GM12878 (cell line): ENCODE measurements at regions of chr9 and their contacts with region 1.

Region 1: DNA sequence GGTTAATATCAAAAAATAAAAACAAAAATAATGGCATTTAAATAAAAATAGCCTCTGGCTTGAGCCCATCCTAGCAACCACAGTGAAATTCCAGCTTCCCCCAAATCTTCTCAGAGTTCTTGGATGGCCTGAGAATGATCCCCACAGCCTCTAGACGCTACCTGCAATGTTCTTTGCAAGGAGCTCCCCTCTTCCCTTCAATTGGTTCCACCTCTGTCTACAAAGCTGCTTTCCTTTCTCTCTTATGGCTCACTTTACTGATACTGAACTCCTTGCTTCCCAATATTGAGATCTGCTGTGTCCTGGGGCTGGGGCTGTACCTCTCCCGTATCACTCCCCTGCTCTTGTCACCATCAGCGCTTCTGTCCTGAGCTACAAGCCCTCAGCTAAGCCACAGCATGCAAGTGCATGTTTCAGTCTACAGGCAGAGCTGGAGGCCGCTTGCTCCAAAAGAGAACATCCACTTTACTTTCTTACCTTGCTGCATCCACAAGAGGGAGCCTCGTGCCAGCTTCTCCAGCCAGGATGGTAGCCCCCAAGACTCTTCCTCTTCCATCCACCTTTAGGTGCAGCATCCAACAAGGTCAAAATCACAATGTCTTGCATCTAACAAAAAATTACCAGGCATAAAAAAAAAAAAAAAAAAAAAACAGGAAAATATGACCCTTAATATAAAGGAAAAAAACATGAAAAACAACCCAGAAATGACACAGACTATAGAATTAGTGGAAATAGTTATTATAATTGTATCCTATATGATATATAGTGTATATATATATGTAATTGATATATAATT is 57.4 kb upstream of the PRSS3 start:
- DNase-seq: no peak
- ATAC-seq: peak; percentile 86
- H3K4me3 ChIP-seq: no peak overlapping the region
- H3K27ac ChIP-seq: no peak overlapping the region
- H3K4me1 ChIP-seq: no peaks in the 10 kb centered on the region
- H3K27me3 ChIP-seq: no peaks in the 10 kb centered on the region; a peak in 2 of 4 replicates
- CTCF ChIP-seq: peak; percentile 54 to 66 (median 56)
- EP300 ChIP-seq: no peak
- POLR2A ChIP-seq: no peak
- RAD21 ChIP-seq: peak; percentile 53

Region 2: GRCh38 chr9:33698267-33698666 is 39.7 kb before region 1 on chr9:
- CTCF ChIA-PET with region 1: no interaction called
- POLR2A ChIA-PET with region 1: no interaction called
- RAD21 ChIA-PET with region 1: no interaction called
- SMC1A ChIA-PET with region 1: no interaction called
- in situ Hi-C with region 1: no loop called
- intact Hi-C with region 1: no loop called
- DNase-seq: no peak
- ATAC-seq: no peak
- H3K4me3 ChIP-seq: no peak overlapping the region
- H3K27ac ChIP-seq: no peak overlapping the region
- H3K4me1 ChIP-seq: no peaks in the 10 kb centered on the region
- H3K27me3 ChIP-seq: no peaks in the 10 kb centered on the region; a peak in 1 of 4 replicates
- CTCF ChIP-seq: no peak
- EP300 ChIP-seq: no peak
- POLR2A ChIP-seq: no peak
- RAD21 ChIP-seq: no peak

Region 3: GRCh38 chr9:33714989-33715388 is 23.0 kb before region 1 on chr9:
- CTCF ChIA-PET with region 1: no interaction called
- POLR2A ChIA-PET with region 1: no interaction called
- RAD21 ChIA-PET with region 1: no interaction called
- SMC1A ChIA-PET with region 1: no interaction called
- in situ Hi-C with region 1: no loop called
- intact Hi-C with region 1: no loop called
- DNase-seq: no peak
- ATAC-seq: no peak
- H3K4me3 ChIP-seq: no peak overlapping the region
- H3K27ac ChIP-seq: no peak overlapping the region
- H3K4me1 ChIP-seq: no peaks in the 10 kb centered on the region
- H3K27me3 ChIP-seq: no peaks in the 10 kb centered on the region
- CTCF ChIP-seq: no peak
- EP300 ChIP-seq: no peak
- POLR2A ChIP-seq: no peak
- RAD21 ChIP-seq: no peak

Region 4: GRCh38 chr9:33852216-33852826 is 114.3 kb after region 1 on chr9:
- CTCF ChIA-PET with region 1: no interaction called
- POLR2A ChIA-PET with region 1: no interaction called
- RAD21 ChIA-PET with region 1: interaction called, 5 read pairs
- SMC1A ChIA-PET with region 1: interaction called, 3 read pairs
- in situ Hi-C with region 1: no loop called
- intact Hi-C with region 1: loop called (anchors 5 kb)
- DNase-seq: no peak
- ATAC-seq: peak; percentile 86
- H3K4me3 ChIP-seq: no peak overlapping the region
- H3K27ac ChIP-seq: no peak overlapping the region
- H3K4me1 ChIP-seq: no peaks in the 10 kb centered on the region; the same call in 1 of the 2 replicates
- H3K27me3 ChIP-seq: no peaks in the 10 kb centered on the region
- CTCF ChIP-seq: peak; percentile 39 to 72 (median 52); a peak in 5 of 6 replicates
- EP300 ChIP-seq: no peak
- POLR2A ChIP-seq: no peak
- RAD21 ChIP-seq: peak; percentile 84